Activated CD4-positive, alpha-beta T cell treated with anti-CD3 and anti-CD28 coated beads for 36 hours (primary cell): ENCODE measurements at regions of chr2 and their contacts with region 1.

Region 1: GRCh38 chr2:174248187-174248997 is at the start of gene OLA1:
- DNase-seq: peak; percentile 98
- ATAC-seq: peak; percentile 97
- H3K4me3 Mint-ChIP-seq: peak within 1 kb of the TSS; percentile 90
- H3K27ac Mint-ChIP-seq: peak within 1 kb of the TSS; percentile 85
- H3K4me1 Mint-ChIP-seq: peaks cover 31% of the 10 kb centered on the region
- H3K27me3 Mint-ChIP-seq: no peaks in the 10 kb centered on the region
- total RNA-seq, gene OLA1: 136 to 157 TPM

Region 2: DNA sequence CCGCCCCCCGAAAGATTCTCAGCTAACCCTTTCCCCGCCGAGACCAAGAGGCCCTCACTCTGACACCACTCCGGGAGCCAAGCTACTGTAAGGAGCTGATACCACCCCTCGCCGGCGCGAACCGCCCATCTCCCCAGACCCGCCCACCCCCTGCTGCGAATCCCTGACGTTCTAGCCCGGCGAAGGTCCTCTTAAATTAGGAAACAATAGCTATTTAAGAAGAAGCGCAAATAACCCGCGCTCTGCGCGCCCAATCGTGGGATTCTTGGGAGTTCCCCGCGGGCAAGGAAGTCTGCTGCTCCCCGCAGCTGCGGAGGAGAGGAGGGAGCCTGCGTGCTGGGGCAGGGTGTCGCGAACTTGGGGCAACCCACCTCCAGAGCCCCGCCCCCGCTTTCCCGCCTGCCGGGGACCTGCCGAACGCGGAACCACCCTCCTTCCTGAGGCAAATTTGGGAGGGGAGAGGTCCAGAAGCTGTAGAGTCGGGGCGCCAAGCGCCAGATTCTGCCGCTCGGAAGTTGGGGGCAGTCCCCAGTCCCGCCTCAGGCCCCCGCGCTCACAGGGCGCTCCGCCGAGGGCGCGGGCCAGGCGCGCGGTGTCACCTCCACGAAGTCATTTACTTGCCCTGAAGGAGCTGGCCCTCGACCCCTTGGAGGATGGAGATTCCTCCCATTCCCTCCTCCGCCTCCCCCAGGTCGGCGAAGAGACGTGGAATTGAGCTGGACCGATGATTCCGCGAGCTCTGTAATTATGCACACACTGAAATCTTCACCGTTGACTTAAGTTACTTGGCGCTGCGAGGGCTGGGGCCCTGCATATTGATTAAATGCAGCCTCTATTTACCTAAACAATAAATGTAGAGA is 78.0 kb after region 1 on chr2:
- CTCF ChIA-PET with region 1: no interaction called
- POLR2A ChIA-PET with region 1: no interaction called
- intact Hi-C with region 1: loop called in 1 of 2 experiments (anchors 2 kb)
- DNase-seq: peak; percentile 46
- ATAC-seq: peak; percentile 49
- H3K4me3 Mint-ChIP-seq: peak overlapping the region; percentile 65
- H3K27ac Mint-ChIP-seq: no peak overlapping the region
- H3K4me1 Mint-ChIP-seq: peaks cover 27% of the 10 kb centered on the region
- H3K27me3 Mint-ChIP-seq: peaks cover 74% of the 10 kb centered on the region

Region 3: DNA sequence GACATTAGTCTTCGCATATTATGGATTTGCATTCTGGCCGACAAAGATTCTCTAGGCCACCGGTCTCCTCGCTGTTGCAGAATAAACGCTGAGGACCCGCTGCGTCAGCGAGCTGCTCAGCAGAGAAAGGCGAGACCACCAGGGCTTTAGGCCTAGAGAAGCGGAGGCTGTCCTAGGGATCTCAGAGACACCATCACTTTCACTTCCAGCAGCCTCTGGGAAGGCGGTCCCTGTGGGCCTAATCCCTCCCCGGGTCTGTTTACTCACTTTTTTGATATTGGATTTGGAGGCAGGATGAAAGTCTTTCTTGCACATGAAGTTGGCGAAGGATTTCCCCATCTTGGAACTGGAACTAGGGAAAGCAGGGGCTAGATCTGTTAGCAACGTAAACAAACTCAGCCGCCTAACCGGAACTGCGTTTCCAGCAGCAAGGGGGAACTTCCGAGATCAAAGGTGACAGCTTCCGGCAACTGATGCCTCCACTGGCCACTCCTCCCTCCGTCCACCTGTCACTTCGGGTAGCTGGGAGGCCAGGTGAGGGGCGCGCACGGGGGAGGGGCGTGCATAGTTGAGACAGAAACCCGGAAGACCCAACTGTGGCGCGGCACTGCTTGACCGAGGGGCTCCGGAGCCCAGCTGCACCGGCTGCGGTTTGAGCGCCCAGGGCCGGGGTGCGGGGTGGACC is 147.0 kb after region 1 on chr2 and contains the start of gene SCRN3:
- CTCF ChIA-PET with region 1: no interaction called
- POLR2A ChIA-PET with region 1: interaction called, 3 read pairs
- intact Hi-C with region 1: loop called in 1 of 2 experiments (anchors 1 kb)
- DNase-seq: peak; percentile 85
- ATAC-seq: peak; percentile 93
- H3K4me3 Mint-ChIP-seq: peak within 1 kb of the TSS; percentile 100
- H3K27ac Mint-ChIP-seq: peak within 1 kb of the TSS; percentile 99
- H3K4me1 Mint-ChIP-seq: peaks cover 35% of the 10 kb centered on the region
- H3K27me3 Mint-ChIP-seq: no peaks in the 10 kb centered on the region
- total RNA-seq, gene SCRN3: 12.7 to 14.1 TPM

Region 4: GRCh38 chr2:176001916-176002687 is 1753.7 kb after region 1 on chr2 and contains the start of gene LNPK:
- CTCF ChIA-PET with region 1: no interaction called
- POLR2A ChIA-PET with region 1: no interaction called
- intact Hi-C with region 1: loop called in 1 of 2 experiments (anchors 5 kb)
- DNase-seq: peak; percentile 95
- ATAC-seq: peak; percentile 93
- H3K4me3 Mint-ChIP-seq: peak within 1 kb of the TSS; percentile 99
- H3K27ac Mint-ChIP-seq: peak within 1 kb of the TSS; percentile 95
- H3K4me1 Mint-ChIP-seq: peaks cover 19% of the 10 kb centered on the region
- H3K27me3 Mint-ChIP-seq: no peaks in the 10 kb centered on the region
- total RNA-seq, gene LNPK: 27.3 to 36.0 TPM